ENCODE measurements at regions of chr4 and their contacts with region 1.

Region 1: DNA sequence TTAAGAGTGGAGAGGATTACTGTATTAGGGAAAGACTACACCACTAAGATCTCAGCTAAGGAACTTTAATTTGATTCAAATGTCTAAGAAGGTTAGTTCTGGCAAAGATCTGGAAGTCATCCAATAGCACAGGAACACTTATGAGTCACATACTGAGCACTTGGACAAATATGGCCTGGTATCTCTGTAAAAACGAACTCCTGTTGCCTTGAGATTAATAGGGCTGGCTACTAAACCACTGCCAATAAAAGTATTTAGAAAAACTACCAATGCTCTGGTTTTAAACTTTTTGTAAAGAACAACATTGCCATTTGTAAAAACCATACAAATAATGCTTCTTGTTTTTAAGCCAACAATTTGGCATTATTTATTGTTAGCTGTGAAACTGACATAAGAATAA is 70.5 kb downstream of the SEC24D start:
- DNase-seq: peak; percentile 99
- ATAC-seq: peak; percentile 78
- H3K4me3 ChIP-seq: no peak overlapping the region
- H3K27ac ChIP-seq: no peak overlapping the region; the same call in 1 of the 2 replicates
- H3K4me1 ChIP-seq: peaks cover 20% of the 10 kb centered on the region
- H3K27me3 ChIP-seq: no peaks in the 10 kb centered on the region
- CTCF ChIP-seq: no peak
- POLR2A ChIP-seq: no peak
- RAD21 ChIP-seq: no peak

Region 2: DNA sequence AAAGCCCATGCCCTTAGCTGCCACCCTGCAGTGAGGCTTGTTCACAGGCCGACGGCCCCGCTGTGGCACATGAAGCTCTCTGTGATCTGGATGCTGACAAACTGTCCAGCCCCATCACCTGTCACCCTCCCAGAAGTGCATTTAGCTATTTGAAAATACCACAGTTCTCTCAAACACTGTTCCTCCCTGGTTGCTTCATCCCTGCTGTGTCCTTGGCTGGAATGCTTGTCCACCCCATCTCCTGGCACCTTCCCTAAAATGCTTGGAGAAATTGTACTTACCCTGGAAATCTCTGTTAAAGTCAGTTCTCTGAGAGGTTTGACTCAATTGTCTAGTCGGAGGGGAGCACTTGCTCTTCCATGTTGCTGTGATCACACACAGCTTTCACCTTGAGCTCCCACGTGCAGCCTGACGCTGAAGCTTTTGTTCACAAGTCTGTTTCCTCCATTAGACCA is 133.3 kb after region 1 on chr4:
- CTCF ChIA-PET with region 1: no interaction called
- POLR2A ChIA-PET with region 1: no interaction called
- dilution Hi-C with region 1: no loop called
- in situ Hi-C with region 1: loop called (anchors 10 kb)
- intact Hi-C with region 1: no loop called
- DNase-seq: no peak
- ATAC-seq: no peak
- H3K4me3 ChIP-seq: no peak overlapping the region
- H3K27ac ChIP-seq: no peak overlapping the region
- H3K4me1 ChIP-seq: no peaks in the 10 kb centered on the region; the same call in 1 of the 2 replicates
- H3K27me3 ChIP-seq: no peaks in the 10 kb centered on the region
- CTCF ChIP-seq: no peak
- POLR2A ChIP-seq: no peak
- RAD21 ChIP-seq: no peak